ENCODE measurements at regions of chr9 and their contacts with region 1.

Region 1: DNA sequence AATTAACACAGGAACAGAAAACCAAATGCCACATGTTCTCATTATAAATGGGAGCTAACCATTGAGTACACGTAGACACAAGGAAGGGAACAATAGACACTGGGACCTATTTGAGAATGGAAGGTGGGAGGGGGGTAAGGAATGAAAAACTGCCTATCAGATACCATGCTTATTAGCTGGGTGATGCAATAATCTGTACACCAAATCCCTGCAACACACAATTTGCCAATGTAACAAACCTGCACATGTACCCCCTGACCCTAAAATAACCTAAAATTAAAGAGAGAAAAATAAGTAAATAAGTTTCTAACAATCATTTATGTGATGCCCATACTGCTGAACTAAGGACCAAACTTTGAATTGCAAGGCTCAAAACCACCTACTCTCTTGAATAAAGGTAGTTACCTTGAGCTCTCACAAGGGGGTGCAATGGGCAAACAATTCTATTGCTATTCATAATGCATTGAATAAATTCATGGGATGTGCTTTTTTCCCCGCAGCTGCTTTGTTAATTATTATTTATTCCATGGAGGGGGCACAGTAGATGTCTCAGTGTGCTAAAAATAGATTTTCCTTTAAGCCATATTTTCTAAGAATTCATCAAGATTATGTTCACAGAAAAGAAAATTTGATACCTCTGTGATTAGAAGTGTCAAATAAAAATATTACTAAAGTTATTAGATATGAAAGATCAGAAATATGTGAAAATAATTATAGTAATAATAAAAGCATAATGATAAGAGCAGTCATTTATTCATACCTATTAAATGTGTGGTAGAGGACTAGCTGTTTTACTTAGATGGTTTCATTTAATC is 76.2 kb upstream of the PTPN3 start:
- DNase-seq: peak in 1 of 2 donors; percentile 44
- H3K4me3 ChIP-seq: no peak overlapping the region
- H3K27ac ChIP-seq: no peak overlapping the region
- H3K4me1 ChIP-seq: no peaks in the 10 kb centered on the region
- H3K27me3 ChIP-seq: no peaks in the 10 kb centered on the region
- CTCF ChIP-seq: peak; percentile 54 to 79 (median 68)
- POLR2A ChIP-seq: no peak

Region 2: DNA sequence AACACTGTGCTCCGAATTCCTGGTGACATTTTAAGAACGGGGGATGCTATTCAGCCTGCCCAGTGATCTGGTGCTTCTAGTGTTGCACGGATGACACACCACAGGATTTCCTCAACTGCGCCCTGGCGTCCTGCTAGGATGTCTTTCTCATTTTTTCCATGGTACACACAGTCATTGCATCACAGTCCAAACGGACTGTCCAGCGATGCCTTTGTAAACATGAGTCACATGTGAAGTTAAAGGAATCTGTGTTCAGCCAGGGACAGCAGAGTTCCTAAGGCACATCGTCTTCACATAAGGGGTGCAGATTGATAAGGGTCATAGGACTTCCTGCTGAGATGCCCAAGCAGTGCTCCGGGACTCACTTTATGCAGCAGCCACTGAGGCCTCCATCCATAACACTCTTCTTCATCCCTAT is 66.8 kb before region 1 on chr9:
- intact Hi-C with region 1: no loop called
- DNase-seq: peak in 1 of 2 donors; percentile 34
- H3K4me3 ChIP-seq: no peak overlapping the region
- H3K27ac ChIP-seq: no peak overlapping the region
- H3K4me1 ChIP-seq: no peaks in the 10 kb centered on the region
- H3K27me3 ChIP-seq: no peaks in the 10 kb centered on the region
- CTCF ChIP-seq: no peak
- POLR2A ChIP-seq: no peak

Region 3: DNA sequence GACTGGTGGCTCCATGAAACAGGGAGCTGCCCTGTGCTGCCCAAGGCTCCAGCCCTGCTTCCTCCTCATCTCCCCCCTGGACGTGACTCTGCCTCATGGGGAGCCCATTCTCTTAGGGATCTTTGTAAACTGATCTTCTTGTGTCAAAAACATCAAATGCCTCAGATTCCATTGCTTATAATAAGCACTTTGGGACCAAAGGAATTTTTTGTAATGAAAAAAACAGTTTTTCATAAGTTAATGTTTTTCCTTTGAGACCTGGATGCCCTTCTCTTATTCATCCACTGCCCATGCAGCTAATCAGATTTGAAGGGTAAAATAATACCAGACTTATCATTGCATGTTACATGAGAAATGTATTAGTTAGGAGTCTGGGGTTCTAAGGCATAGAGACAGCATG is 247.4 kb after region 1 on chr9:
- intact Hi-C with region 1: loop called (anchors 10 kb)
- DNase-seq: no peak
- H3K4me3 ChIP-seq: no peak overlapping the region
- H3K27ac ChIP-seq: no peak overlapping the region
- H3K4me1 ChIP-seq: peaks cover 0 to 5% of the 10 kb centered on the region in 2 donors
- H3K27me3 ChIP-seq: no peaks in the 10 kb centered on the region
- CTCF ChIP-seq: no peak
- POLR2A ChIP-seq: no peak

Region 4: DNA sequence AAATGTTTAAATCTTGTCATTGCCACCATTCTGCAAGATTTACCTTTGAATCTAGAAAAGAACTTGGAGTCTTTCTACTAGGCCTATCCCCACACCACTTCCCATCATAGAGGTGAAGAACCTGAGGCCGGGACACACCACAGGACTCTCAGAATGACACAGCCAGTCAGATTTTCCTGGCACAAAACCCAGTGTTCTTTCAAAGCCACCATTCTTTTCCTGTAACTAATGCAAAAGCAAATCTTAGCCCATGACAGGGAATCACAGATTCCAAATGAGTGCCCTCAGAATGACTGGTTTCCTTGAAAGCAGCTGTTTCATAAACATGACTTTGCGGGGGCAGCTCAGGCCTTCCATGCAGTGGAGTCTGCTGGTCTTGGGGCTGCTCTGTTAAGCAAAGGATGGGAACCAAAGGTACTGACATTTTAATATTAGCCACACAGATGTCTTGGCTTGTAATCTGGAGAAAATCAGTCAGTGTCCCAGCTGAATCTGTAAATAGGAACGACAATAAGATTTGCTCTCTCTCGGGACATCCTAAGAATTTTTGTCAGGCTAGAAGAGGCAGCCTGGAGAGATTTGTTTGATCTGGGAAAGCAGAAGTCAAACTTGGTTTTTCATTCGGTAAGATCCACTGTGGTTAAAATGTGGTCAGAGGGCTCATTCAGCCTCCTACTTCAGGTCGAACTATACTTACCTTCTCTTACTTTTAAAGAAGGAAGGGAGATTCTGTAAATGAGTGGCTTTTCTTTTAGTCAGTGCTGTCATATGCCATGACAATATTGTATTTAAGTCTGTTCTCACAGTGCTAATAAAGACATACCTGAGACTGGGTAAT is 320.9 kb after region 1 on chr9:
- intact Hi-C with region 1: loop called (anchors 10 kb)
- DNase-seq: no peak
- H3K4me3 ChIP-seq: no peak overlapping the region
- H3K27ac ChIP-seq: no peak overlapping the region
- H3K4me1 ChIP-seq: no peaks in the 10 kb centered on the region
- H3K27me3 ChIP-seq: no peaks in the 10 kb centered on the region
- CTCF ChIP-seq: no peak
- POLR2A ChIP-seq: no peak